Aorta (tissue), 5 donors: ENCODE measurements at regions of chr6 and their contacts with region 1.

Region 1: GRCh38 chr6:84774157-84774984 is 10.0 kb upstream of the TBX18 start:
- DNase-seq: peak; percentile 72 to 93
- ATAC-seq: peak; percentile 91
- H3K4me3 ChIP-seq: peak overlapping the region; percentile 22 to 55
- H3K27ac ChIP-seq: peak overlapping the region; percentile 83 to 89
- H3K4me1 ChIP-seq: no peaks in the 10 kb centered on the region
- H3K27me3 ChIP-seq: no peaks in the 10 kb centered on the region

Region 2: DNA sequence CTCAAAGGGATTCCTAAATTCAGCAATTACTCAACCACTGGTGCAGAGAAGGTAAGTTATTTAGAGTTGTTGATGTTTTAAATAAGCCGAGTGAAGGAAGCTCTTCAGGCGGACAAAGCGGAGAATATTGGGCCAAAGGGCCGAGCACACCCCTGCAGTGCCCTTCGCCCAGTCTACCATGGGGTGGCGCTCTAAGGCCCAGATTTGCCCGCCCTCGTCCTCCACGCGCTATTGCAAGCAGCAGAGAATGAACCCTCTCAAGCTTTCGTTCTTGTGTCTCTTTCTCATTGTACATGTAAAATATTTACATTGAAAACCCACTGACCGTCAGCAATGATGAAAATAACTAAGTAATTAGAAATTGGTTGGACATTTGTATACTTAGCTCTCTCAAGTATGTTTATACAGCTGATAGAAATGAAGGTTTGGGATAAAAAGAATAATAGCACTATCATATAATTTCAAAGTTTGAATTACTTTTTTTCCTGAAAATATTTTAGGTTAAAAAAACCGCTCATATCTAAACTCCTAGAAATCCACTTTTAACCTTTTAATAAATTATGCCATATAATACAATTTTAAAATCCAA is 351.9 kb before region 1 on chr6:
- intact Hi-C with region 1: loop called (anchors 2 to 5 kb)
- DNase-seq: peak; percentile 68 to 91
- ATAC-seq: peak; percentile 91
- H3K4me3 ChIP-seq: no peak overlapping the region
- H3K27ac ChIP-seq: no peak overlapping the region
- H3K4me1 ChIP-seq: peaks cover 0 to 7% of the 10 kb centered on the region in 2 donors
- H3K27me3 ChIP-seq: no peaks in the 10 kb centered on the region

Region 3: GRCh38 chr6:85126485-85127167 is 352.3 kb after region 1 on chr6:
- intact Hi-C with region 1: loop called in 1 of 2 experiments (anchors 10 kb)
- DNase-seq: peak; percentile 47 to 85
- ATAC-seq: peak; percentile 83
- H3K4me3 ChIP-seq: no peak overlapping the region
- H3K27ac ChIP-seq: no peak overlapping the region
- H3K4me1 ChIP-seq: no peaks in the 10 kb centered on the region
- H3K27me3 ChIP-seq: no peaks in the 10 kb centered on the region

Region 4: DNA sequence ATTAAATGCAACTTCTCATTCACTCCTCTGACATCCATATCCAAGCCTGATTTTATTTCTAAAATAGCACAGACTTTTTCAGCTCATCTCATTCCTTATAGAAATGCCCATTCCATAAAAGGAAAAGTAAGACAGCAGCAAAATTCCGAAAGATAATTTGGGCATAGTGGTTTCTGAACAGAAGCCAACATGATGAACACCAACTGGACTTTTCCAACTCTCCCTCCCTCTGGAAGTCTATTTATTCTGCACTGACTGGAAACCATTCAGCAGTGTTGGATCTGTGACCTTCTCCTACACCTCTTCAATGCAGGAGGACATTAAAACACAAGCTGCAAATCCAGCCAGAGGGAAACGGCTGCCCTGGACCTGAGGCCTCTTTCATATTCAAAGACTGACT is 369.3 kb after region 1 on chr6:
- intact Hi-C with region 1: no loop called
- DNase-seq: no peak
- ATAC-seq: no peak
- H3K4me3 ChIP-seq: no peak overlapping the region
- H3K27ac ChIP-seq: no peak overlapping the region
- H3K4me1 ChIP-seq: no peaks in the 10 kb centered on the region
- H3K27me3 ChIP-seq: no peaks in the 10 kb centered on the region